ENCODE measurements at regions of chr2 and their contacts with region 1.

Region 1: DNA sequence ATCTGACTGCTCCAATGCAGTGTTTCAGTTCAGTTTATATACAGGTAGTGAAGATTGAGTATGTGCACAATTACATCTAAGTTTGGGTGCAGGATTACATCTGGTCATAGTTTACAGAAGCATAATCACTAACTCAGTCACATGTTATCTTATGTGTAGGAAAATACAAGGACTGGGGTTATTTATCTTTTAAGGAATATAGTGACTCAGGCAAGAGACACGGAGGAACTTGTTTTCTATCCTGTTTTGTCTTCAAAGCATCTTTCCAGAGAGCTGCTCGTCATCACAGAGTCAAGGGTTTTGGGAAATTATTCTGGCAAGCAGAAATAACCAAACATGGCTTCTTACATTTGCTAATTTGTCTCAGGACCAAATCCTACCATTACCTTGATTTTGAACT is 1371.5 kb upstream of the TMEFF2 start:
- DNase-seq: no peak
- H3K4me3 ChIP-seq: no peak overlapping the region
- H3K27ac ChIP-seq: no peak overlapping the region
- H3K4me1 ChIP-seq: no peaks in the 10 kb centered on the region
- H3K27me3 ChIP-seq: no peaks in the 10 kb centered on the region
- CTCF ChIP-seq: no peak
- EP300 ChIP-seq: no peak
- POLR2A ChIP-seq: no peak

Region 2: GRCh38 chr2:193608451-193608850 is 42.2 kb after region 1 on chr2:
- intact Hi-C with region 1: loop called in 1 of 4 experiments (anchors 1 kb)
- DNase-seq: no peak
- H3K4me3 ChIP-seq: no peak overlapping the region
- H3K27ac ChIP-seq: no peak overlapping the region
- H3K4me1 ChIP-seq: no peaks in the 10 kb centered on the region
- H3K27me3 ChIP-seq: no peaks in the 10 kb centered on the region
- CTCF ChIP-seq: no peak
- EP300 ChIP-seq: no peak
- POLR2A ChIP-seq: no peak

Measured in ovary (tissue), 10 donors.